CD4-positive, alpha-beta memory T cell (primary cell): ENCODE measurements at regions of chr12 and their contacts with region 1.

Region 1: DNA sequence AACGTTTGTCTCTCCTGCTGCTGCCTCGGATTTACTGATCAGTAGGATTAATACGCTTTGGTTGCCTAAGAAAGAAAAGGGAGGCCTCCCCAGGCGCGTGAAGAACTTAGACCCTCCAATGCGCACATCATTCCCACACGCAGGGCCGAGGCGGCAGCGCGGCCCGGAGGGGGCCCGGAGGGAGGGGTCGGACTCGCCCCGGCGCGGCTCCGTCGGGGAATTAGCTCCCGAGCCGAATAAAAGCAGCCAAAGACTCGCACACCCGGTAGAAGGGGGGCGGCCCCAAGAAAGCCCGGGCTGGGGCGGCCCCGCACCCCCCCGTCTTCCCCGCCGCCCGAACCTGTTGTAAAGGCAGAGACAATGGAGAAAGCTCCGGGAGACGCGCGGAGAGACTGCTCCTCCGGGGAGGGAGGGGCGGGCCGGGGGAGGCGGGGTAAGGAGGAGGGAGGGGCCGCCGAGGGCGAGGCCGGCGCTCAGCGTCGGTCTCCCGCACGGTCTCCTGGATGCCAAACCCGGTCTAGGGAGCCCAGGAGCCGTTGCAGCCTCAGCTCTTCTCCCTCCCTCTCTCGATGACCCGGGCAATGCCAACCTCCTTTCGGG is at the start of gene NELL2:
- DNase-seq: peak; percentile 46 to 77 (median 50)
- H3K4me3 ChIP-seq: peak within 1 kb of the TSS; percentile 67 to 74
- H3K4me3 Mint-ChIP-seq: peak within 1 kb of the TSS; percentile 90 to 99 (median 98)
- H3K27ac ChIP-seq: peak within 1 kb of the TSS; percentile 42
- H3K27ac Mint-ChIP-seq: peak within 1 kb of the TSS; percentile 78 to 94 (median 90)
- H3K4me1 ChIP-seq: peaks cover 35% of the 10 kb centered on the region
- H3K4me1 Mint-ChIP-seq: peaks cover 16 to 47% (median 32%) of the 10 kb centered on the region in 4 donors
- H3K27me3 ChIP-seq: peaks cover 6% of the 10 kb centered on the region
- H3K27me3 Mint-ChIP-seq: peaks cover 9 to 19% of the 10 kb centered on the region in 2 donors
- total RNA-seq, gene NELL2: 233 to 257 TPM

Region 2: GRCh38 chr12:44817687-44818086 is 58.4 kb before region 1 on chr12:
- CTCF ChIA-PET with region 1: interaction called, 228 read pairs
- POLR2A ChIA-PET with region 1: interaction called, 58 read pairs
- intact Hi-C with region 1: loop called (anchors 1 kb)
- DNase-seq: no peak
- H3K4me3 ChIP-seq: no peak overlapping the region
- H3K4me3 Mint-ChIP-seq: peak overlapping the region in 2 of 8 donors; percentile 6 to 8
- H3K27ac ChIP-seq: no peak overlapping the region
- H3K27ac Mint-ChIP-seq: peak overlapping the region in 5 of 7 donors; percentile 2 to 71 (median 28)
- H3K4me1 ChIP-seq: peaks cover 49% of the 10 kb centered on the region
- H3K4me1 Mint-ChIP-seq: peaks cover 15 to 76% (median 56%) of the 10 kb centered on the region in 4 donors
- H3K27me3 ChIP-seq: no peaks in the 10 kb centered on the region
- H3K27me3 Mint-ChIP-seq: no peaks in the 10 kb centered on the region

Region 3: GRCh38 chr12:44847888-44848702 is 28.0 kb before region 1 on chr12:
- CTCF ChIA-PET with region 1: interaction called, 9 read pairs
- POLR2A ChIA-PET with region 1: interaction called, 47 read pairs
- intact Hi-C with region 1: loop called (anchors 1 kb)
- DNase-seq: peak; percentile 79 to 88 (median 82)
- H3K4me3 ChIP-seq: peak overlapping the region in 1 of 2 donors; percentile 46
- H3K4me3 Mint-ChIP-seq: peak overlapping the region; percentile 67 to 86 (median 78)
- H3K27ac ChIP-seq: peak overlapping the region; percentile 62
- H3K27ac Mint-ChIP-seq: peak overlapping the region; percentile 92 to 100 (median 96)
- H3K4me1 ChIP-seq: peaks cover 88% of the 10 kb centered on the region
- H3K4me1 Mint-ChIP-seq: peaks cover 37 to 90% (median 59%) of the 10 kb centered on the region in 4 donors
- H3K27me3 ChIP-seq: no peaks in the 10 kb centered on the region
- H3K27me3 Mint-ChIP-seq: no peaks in the 10 kb centered on the region

Region 4: DNA sequence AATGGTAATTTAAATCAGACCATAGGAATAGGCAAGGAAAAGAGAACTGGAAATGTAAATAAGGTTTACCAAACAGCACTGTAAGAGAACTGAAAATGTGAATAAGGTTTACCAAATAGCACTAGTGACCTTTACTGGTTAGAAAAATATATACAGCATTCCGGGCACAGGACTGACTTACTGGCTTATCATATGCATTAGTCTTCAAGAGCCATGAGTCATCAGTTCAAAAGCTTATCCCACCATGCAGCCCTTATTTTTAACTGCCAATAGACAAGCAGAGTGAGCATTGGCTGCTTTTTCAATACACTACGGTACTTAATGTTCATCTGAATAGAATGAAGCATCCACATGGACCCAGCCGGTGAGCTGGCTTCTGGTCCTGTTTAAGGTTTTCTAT is 13.1 kb after region 1 on chr12:
- CTCF ChIA-PET with region 1: interaction called, 10 read pairs
- POLR2A ChIA-PET with region 1: no interaction called
- intact Hi-C with region 1: no loop called
- DNase-seq: no peak
- H3K4me3 ChIP-seq: no peak overlapping the region
- H3K4me3 Mint-ChIP-seq: no peak overlapping the region
- H3K27ac ChIP-seq: no peak overlapping the region
- H3K27ac Mint-ChIP-seq: no peak overlapping the region
- H3K4me1 ChIP-seq: no peaks in the 10 kb centered on the region
- H3K4me1 Mint-ChIP-seq: no peaks in the 10 kb centered on the region
- H3K27me3 ChIP-seq: no peaks in the 10 kb centered on the region
- H3K27me3 Mint-ChIP-seq: peaks cover 0 to 3% of the 10 kb centered on the region in 2 donors